HAP-1 (cell line): ENCODE measurements at regions of chr14 and their contacts with region 1.

Region 1: DNA sequence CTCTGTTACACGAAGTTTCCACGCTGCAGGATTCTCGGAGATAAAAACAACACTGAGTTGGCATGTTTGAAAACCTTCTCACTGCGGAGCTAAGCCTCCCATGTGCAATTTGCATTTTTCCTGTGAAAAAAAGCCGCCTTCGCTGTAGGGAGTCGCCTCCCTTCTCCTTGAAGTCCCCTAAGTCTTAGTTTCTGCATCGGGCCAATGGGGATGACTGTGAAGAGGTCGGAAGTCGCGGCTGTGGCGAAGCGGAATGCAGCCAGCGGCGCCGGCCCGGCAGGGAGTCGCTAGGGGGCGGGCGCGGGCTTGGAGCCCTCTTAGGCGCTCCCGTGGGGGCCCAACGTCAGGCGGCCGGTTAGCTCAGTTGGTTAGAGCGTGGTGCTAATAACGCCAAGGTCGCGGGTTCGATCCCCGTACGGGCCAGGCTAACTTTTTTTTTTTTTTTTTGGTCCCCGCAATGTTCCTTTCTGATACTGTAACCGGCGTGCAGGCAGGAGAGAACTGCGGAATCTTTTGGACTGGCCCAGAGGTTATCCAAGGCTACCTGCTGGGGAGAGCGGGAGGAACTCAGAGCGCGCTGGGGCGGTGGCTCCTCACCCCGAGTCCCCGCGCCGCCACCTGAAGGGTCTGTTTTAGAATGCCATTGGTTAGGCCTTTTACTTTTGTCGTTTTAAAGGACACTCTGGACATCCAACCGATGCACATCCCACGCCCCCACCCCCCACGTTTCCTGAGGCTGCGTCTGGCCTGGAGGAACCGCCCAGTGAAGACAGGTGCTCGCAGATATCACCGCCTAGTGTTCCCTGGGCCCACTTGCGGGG is 2.6 kb upstream of the ZNF839 start:
- DNase-seq: peak; percentile 94 to 96
- H3K4me3 ChIP-seq: peak overlapping the region; percentile 41
- H3K4me1 ChIP-seq: peaks cover 41% of the 10 kb centered on the region
- H3K27me3 ChIP-seq: no peaks in the 10 kb centered on the region

Region 2: DNA sequence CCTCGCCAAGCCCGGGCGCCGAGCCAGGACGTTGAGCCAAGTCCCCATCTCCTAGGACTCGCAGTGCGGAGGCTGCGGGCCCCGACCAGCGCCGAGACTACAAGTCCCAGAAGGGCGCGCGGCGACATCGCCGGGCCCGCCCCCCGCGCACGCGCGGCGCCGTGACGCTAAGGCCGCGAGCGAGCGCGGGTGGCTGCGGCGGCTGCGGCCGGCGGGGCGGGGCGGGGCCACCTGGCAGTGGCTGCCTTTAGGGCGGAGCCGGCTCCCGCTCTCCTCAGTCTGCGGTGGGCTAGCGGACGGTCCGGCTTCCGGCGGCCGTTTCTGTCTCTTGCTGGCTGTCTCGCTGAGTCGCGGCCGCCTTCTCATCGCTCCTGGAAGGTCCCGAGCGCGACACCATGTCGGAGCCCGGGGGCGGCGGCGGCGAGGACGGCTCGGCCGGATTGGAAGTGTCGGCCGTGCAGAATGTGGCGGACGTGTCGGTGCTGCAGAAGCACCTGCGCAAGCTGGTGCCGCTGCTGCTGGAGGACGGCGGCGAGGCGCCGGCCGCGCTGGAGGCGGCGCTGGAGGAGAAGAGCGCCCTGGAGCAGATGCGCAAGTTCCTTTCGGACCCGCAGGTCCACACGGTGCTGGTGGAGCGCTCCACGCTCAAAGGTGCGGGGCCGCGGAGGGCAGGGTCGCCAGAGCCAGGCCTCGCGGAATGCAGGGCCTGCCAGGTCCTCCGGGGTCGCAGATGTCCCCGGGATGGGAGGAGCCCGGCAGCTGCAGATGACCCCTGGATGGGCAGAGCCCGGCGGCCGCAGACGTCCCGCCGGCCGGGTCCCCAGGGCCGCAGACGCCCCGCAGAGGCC is 352.4 kb before region 1 on chr14 and contains the start of gene DYNC1H1:
- in situ Hi-C with region 1: loop called (anchors 5 kb)
- DNase-seq: peak; percentile 87 to 93
- H3K4me3 ChIP-seq: peak within 1 kb of the TSS; percentile 98
- H3K4me1 ChIP-seq: peaks cover 10% of the 10 kb centered on the region; the same call in 1 of the 2 replicates
- H3K27me3 ChIP-seq: no peaks in the 10 kb centered on the region

Region 3: GRCh38 chr14:102071283-102071998 is 245.5 kb before region 1 on chr14:
- in situ Hi-C with region 1: loop called (anchors 10 kb)
- DNase-seq: no peak
- H3K4me3 ChIP-seq: no peak overlapping the region
- H3K4me1 ChIP-seq: no peaks in the 10 kb centered on the region
- H3K27me3 ChIP-seq: no peaks in the 10 kb centered on the region

Region 4: GRCh38 chr14:102139248-102140026 is 177.5 kb before region 1 on chr14 and contains the start of gene WDR20:
- in situ Hi-C with region 1: loop called (anchors 25 kb)
- DNase-seq: peak; percentile 94 to 99
- H3K4me3 ChIP-seq: peak within 1 kb of the TSS; percentile 96
- H3K4me1 ChIP-seq: peaks cover 15% of the 10 kb centered on the region
- H3K27me3 ChIP-seq: no peaks in the 10 kb centered on the region

Region 5: GRCh38 chr14:102154821-102155549 is 162.0 kb before region 1 on chr14:
- in situ Hi-C with region 1: no loop called
- DNase-seq: no peak
- H3K4me3 ChIP-seq: no peak overlapping the region
- H3K4me1 ChIP-seq: peaks cover 10% of the 10 kb centered on the region; the same call in 1 of the 2 replicates
- H3K27me3 ChIP-seq: no peaks in the 10 kb centered on the region

Region 6: GRCh38 chr14:102200690-102201352 is 116.1 kb before region 1 on chr14:
- in situ Hi-C with region 1: no loop called
- DNase-seq: no peak
- H3K4me3 ChIP-seq: no peak overlapping the region
- H3K4me1 ChIP-seq: no peaks in the 10 kb centered on the region
- H3K27me3 ChIP-seq: no peaks in the 10 kb centered on the region

Region 7: GRCh38 chr14:102235275-102235897 is 81.6 kb before region 1 on chr14:
- in situ Hi-C with region 1: loop called (anchors 5 kb)
- DNase-seq: peak; percentile 76 to 91
- H3K4me3 ChIP-seq: no peak overlapping the region
- H3K4me1 ChIP-seq: no peaks in the 10 kb centered on the region
- H3K27me3 ChIP-seq: no peaks in the 10 kb centered on the region